Activated CD8-positive, alpha-beta T cell treated with anti-CD3 and anti-CD28 coated beads for 36 hours (primary cell): ENCODE measurements at regions of chr1 and their contacts with region 1.

Region 1: DNA sequence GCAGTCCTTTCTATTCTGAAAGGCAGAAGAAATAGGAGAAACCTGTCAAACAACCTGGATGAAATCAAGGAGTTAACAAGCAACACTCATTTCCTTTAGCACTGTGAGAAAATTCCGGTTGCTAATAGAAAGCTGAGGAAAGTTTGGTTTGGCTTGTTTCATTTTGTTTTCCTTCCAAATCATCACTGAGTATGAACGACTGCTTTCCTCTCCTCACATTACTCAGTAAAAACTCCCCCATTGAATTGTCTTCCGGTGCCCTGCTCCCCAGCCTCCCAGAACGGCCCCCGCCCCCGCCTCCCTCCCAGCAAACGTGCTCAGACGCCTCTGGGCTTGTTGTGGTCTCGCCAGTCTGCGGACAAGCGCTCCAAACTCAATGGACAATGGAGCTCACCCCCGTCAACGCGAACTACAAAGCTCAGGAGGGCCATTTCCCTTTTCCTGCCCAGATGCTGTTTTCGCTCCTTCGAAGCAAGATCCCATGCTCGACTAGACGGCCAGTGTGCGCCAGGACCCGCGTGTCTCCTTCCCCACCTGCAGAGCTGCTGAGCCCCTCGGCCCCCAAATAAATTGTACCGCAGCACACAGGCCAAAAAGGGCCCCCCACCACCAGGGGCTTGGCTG is 747 bp downstream of the STX6 start:
- DNase-seq: peak; percentile 80
- ATAC-seq: peak; percentile 48
- H3K4me3 Mint-ChIP-seq: peak overlapping the region; percentile 97
- H3K27ac Mint-ChIP-seq: peak overlapping the region; percentile 97
- H3K4me1 Mint-ChIP-seq: peaks cover 40% of the 10 kb centered on the region
- H3K27me3 Mint-ChIP-seq: no peaks in the 10 kb centered on the region
- CTCF ChIP-seq: no peak

Region 2: DNA sequence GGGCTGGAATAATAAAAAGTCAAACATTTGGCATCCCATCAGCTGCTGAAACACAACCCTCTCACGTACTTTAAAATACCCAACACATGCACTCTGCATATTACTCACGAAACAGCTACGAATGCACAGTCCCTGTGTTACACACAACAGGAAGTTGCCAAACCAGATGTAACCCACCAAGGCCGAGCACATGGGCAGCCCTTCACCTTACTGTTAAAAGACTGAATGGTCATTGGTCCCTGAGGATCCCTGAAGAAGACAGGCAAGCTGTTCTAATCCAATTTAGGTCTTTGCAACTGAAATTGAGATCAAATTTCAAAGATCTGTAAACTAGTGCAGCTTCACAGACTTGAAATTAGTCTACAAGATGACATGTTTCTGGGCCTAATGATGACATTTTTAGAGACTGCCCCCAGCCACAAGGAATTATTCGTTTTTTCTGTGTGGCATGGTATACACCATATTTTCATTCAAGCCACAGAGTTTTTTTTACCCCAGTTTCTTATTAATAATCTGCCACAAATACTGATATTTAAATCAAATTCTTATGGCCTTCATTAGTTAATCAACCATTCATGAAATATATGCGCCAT is 41.0 kb after region 1 on chr1:
- CTCF ChIA-PET with region 1: no interaction called
- POLR2A ChIA-PET with region 1: interaction called, 15 read pairs
- intact Hi-C with region 1: no loop called
- DNase-seq: peak; percentile 80
- ATAC-seq: peak; percentile 93
- H3K4me3 Mint-ChIP-seq: peak overlapping the region; percentile 61
- H3K27ac Mint-ChIP-seq: peak overlapping the region; percentile 88
- H3K4me1 Mint-ChIP-seq: peaks cover 20% of the 10 kb centered on the region
- H3K27me3 Mint-ChIP-seq: no peaks in the 10 kb centered on the region
- CTCF ChIP-seq: no peak

Region 3: GRCh38 chr1:181075396-181076350 is 53.8 kb after region 1 on chr1:
- CTCF ChIA-PET with region 1: no interaction called
- POLR2A ChIA-PET with region 1: no interaction called
- intact Hi-C with region 1: no loop called
- DNase-seq: no peak
- ATAC-seq: no peak
- H3K4me3 Mint-ChIP-seq: no peak overlapping the region
- H3K27ac Mint-ChIP-seq: no peak overlapping the region
- H3K4me1 Mint-ChIP-seq: peaks cover 5% of the 10 kb centered on the region
- H3K27me3 Mint-ChIP-seq: peaks cover 9% of the 10 kb centered on the region
- CTCF ChIP-seq: no peak

Region 4: GRCh38 chr1:181105134-181106021 is 83.5 kb after region 1 on chr1:
- CTCF ChIA-PET with region 1: no interaction called
- POLR2A ChIA-PET with region 1: interaction called, 10 read pairs
- intact Hi-C with region 1: no loop called
- DNase-seq: peak; percentile 92
- ATAC-seq: peak; percentile 83
- H3K4me3 Mint-ChIP-seq: peak overlapping the region; percentile 77
- H3K27ac Mint-ChIP-seq: peak overlapping the region; percentile 71
- H3K4me1 Mint-ChIP-seq: peaks cover 53% of the 10 kb centered on the region
- H3K27me3 Mint-ChIP-seq: peaks cover 11% of the 10 kb centered on the region
- CTCF ChIP-seq: no peak

Region 5: DNA sequence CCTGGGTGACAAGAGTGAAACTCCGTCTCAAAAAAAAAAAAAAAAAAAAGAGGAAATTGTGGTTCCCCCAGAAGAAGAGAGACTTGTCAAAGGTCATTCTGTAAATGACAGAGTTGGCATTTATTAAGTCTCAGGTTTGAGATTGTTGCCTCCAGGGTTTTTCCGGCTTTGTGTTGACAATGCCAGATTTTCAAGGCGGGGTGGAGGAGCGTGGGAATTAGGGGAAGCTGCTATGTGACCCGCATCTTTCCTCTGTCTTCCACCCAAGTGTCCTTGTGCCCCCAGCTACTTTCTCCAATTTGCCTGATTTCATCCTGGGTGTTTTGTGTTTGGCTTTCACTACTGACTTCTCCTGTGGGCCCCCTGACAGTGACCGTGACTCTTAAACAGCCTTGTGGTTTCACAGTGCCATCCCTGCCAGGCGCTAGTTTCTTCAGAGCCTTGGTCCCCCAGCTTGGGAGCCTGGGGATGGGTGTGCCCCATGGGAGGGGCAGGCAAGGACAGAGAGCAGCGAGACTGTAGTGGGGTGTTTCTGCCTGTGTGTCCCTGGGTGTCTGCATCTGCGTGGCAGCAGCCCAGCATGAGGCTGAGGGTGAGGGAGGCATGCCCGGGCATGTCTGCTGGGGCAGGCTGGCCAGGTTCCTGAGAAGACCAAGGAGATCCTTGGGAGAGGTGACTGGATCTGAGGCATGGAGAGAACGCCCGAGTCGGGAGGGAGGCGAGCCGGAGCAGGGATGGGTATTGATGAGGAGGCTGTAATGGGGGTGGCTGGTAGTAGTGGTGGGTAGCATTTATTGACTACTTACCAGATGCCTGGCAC is 112.8 kb after region 1 on chr1:
- CTCF ChIA-PET with region 1: no interaction called
- POLR2A ChIA-PET with region 1: interaction called, 10 read pairs
- intact Hi-C with region 1: no loop called
- DNase-seq: peak; percentile 83
- ATAC-seq: peak; percentile 82
- H3K4me3 Mint-ChIP-seq: peak overlapping the region; percentile 63
- H3K27ac Mint-ChIP-seq: peak overlapping the region; percentile 93
- H3K4me1 Mint-ChIP-seq: peaks cover 65% of the 10 kb centered on the region
- H3K27me3 Mint-ChIP-seq: peaks cover 6% of the 10 kb centered on the region
- CTCF ChIP-seq: no peak